GM10248 (cell line): ENCODE measurements at regions of chr17 and their contacts with region 1.

Region 1: DNA sequence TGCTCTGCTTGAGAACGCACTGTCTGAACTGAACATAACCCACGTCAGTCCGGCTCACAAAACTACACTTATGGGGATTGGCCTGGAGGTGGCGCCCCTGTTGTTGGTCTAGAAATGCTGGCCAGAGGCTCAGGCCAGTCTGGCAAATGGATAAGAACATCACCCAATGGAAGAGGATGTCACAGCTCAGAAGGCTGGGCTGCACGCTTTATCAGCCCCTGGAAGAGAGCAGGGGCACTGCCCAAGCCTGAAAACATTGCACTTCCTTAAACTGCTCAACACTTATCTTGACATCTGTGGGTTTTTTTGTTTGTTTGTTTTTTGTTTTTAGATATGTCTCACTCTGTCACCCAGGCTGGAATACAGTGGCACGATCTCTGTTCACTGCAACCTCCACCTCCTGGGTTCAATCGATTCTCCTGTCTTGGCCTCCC is 24.8 kb upstream of the BPTF start:
- DNase-seq: peak; percentile 82
- CTCF ChIP-seq: peak; percentile 82

Region 2: DNA sequence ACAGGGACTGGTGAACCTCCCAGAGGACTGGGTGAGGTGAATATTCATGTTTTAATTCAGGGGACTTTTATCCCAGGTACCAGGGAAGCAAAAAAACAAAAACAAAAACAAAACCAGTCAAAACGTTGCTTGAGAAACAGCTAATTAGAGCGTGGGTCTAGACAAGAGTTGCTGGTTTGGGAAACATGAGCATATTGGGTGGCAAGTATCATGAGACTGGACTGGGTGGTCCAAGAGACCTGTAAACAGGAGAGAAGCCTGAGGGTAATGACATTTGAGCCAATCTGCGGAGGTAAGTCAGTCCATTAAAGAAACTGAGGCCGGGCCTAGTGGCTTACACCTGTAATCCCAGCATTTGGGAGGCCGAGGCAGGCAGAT is 13.3 kb after region 1 on chr17:
- CTCF ChIA-PET with region 1: interaction called, 12 read pairs
- POLR2A ChIA-PET with region 1: interaction called, 3 read pairs
- DNase-seq: no peak
- CTCF ChIP-seq: no peak

Region 3: GRCh38 chr17:67824735-67825626 is 24.5 kb after region 1 on chr17 and contains the start of gene BPTF:
- CTCF ChIA-PET with region 1: interaction called, 38 read pairs
- POLR2A ChIA-PET with region 1: no interaction called
- DNase-seq: peak; percentile 89
- CTCF ChIP-seq: peak; percentile 94

Region 4: DNA sequence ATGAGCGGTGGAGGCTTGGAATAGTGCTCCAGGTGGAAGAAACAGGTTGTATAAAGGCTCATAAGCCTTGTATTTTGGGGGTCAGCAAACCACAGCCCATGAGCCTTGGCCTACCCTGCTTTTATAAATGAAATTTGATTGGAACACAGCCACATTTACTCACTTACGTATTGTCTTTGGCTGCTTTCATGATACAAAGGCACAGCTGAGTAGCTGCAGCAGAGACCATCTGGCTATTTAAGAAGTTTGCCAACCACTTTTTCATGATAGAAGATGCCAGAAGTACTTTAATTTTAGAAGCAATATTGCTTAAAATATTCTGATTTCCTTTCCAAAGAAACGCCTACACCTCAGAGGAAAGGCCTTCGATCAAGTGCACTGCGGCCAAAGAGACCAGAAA is 122.0 kb after region 1 on chr17:
- CTCF ChIA-PET with region 1: interaction called, 13 read pairs
- POLR2A ChIA-PET with region 1: no interaction called
- DNase-seq: no peak
- CTCF ChIP-seq: no peak

Region 5: DNA sequence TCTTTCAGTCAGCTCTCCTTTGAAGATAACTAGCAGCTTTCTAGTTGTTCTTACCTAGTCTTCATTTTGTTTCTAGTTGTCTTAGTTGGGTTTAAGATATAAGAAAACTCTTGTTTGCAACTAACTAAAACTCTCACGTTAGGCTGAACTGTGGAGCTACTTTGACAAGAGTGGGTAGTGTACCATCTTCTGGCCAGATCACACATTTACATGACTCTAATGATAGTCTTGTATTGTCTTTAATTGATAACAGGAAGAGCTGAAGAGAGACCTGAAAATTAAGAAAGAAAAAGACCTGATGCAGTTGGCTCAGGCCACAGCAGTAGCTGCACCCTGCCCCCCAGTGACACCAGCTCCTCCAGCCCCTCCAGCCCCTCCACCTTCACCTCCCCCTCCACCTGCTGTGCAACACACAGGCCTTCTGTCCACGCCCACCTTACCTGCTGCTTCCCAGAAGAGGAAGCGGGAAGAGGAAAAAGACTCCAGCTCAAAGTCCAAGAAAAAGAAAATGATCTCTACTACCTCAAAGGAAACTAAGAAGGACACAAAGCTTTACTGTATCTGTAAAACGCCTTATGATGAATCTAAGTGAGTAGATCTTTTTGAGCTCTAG is 158.9 kb after region 1 on chr17:
- CTCF ChIA-PET with region 1: interaction called, 13 read pairs
- POLR2A ChIA-PET with region 1: no interaction called
- DNase-seq: no peak
- CTCF ChIP-seq: no peak